GM13977 (cell line): ENCODE measurements at regions of chr15 and their contacts with region 1.

Region 1: GRCh38 chr15:32659340-32660155 is 18.0 kb downstream of the SCG5 start:
- DNase-seq: no peak
- CTCF ChIP-seq: no peak

Region 2: DNA sequence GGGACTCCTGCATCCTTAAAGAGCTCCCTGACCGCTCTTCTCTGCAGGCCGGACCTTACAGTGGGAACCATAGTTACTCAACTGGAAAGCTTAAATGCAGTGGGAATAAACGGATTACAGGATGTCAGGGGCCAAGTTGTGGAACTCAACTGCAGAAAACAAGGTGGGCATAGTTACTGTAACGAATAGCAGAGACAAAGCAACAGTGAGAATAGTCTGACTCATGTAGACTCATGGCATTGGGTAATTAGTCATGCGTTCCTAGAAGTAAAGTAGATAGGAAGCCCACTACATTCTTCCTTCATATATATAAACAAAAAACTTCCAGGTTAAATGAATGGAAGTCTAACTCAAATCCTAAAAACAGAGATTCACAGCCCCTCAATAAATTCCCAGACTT is 724.7 kb before region 1 on chr15:
- in situ Hi-C with region 1: no loop called
- DNase-seq: no peak
- CTCF ChIP-seq: no peak

Region 3: GRCh38 chr15:32994810-32995424 is 335.4 kb after region 1 on chr15:
- in situ Hi-C with region 1: loop called (anchors 10 kb)
- DNase-seq: no peak
- CTCF ChIP-seq: peak; percentile 40